Cardiac septum (tissue), 1 donor: ENCODE measurements at regions of chr10 and their contacts with region 1.

Region 1: GRCh38 chr10:113385021-113385999 is 167.5 kb upstream of the HABP2 start:
- DNase-seq: peak; percentile 85

Region 2: GRCh38 chr10:112565434-112566053 is 819.8 kb before region 1 on chr10:
- intact Hi-C with region 1: loop called (anchors 10 kb)
- DNase-seq: no peak

Region 3: GRCh38 chr10:112721080-112721698 is 664.1 kb before region 1 on chr10:
- intact Hi-C with region 1: loop called (anchors 5 kb)
- DNase-seq: no peak

Region 4: GRCh38 chr10:112949875-112950507 is 435.3 kb before region 1 on chr10 and contains the start of gene TCF7L2:
- intact Hi-C with region 1: loop called (anchors 5 kb)
- DNase-seq: peak; percentile 96
- total RNA-seq, gene TCF7L2: 11.7 TPM

Region 5: GRCh38 chr10:113131613-113132261 is 253.6 kb before region 1 on chr10:
- intact Hi-C with region 1: loop called (anchors 5 kb)
- DNase-seq: no peak